CD4-positive, alpha-beta memory T cell (primary cell): ENCODE measurements at regions of chr1 and their contacts with region 1.

Region 1: GRCh38 chr1:93078986-93079654 is at the start of gene MTF2:
- DNase-seq: peak; percentile 89 to 91 (median 90)
- H3K4me3 ChIP-seq: peak within 1 kb of the TSS; percentile 97
- H3K4me3 Mint-ChIP-seq: peak within 1 kb of the TSS; percentile 92 to 99 (median 98)
- H3K27ac ChIP-seq: peak within 1 kb of the TSS; percentile 96
- H3K27ac Mint-ChIP-seq: peak within 1 kb of the TSS; percentile 94 to 100 (median 95)
- H3K4me1 ChIP-seq: peaks cover 46% of the 10 kb centered on the region
- H3K4me1 Mint-ChIP-seq: peaks cover 21 to 58% (median 37%) of the 10 kb centered on the region in 4 donors
- H3K27me3 ChIP-seq: no peaks in the 10 kb centered on the region
- H3K27me3 Mint-ChIP-seq: no peaks in the 10 kb centered on the region
- total RNA-seq, gene MTF2: 46.5 to 47.4 TPM

Region 2: DNA sequence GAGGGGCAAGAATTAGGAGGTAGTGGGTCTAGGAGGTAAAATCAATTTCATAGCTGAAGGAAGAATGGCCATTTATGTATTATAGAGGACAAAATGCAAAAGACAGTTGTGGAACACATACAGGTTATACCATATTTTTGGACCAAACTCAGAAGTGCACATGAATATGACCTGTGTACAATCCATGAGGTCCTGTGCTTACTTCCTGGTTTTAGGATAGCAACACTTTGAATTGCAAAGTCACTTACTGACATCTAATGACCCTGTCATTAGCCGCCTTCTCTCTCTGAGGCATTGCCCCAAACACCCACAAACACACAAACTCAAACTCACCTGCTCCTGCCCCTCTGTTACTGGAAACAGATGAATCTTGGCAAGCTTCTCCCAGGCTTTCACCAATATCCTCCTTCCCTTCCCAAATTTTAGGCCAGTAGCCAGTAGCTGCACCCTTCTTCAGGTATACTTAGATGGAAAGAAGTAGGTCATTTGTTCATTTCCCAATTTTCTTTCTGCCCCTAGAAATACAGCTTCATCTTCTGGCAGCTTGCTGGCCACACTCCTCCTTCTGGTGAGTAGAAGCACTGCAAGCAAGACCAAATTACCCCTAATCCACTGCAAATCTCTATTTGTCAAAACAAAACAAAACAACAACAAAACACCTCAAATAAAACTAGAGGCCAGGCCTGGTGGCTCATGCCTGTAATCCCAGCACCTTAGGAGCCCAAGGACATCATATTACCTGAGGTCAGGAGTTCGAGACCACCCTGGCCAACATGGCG is 260.9 kb before region 1 on chr1:
- CTCF ChIA-PET with region 1: no interaction called
- POLR2A ChIA-PET with region 1: no interaction called
- intact Hi-C with region 1: no loop called
- DNase-seq: peak in 4 of 5 donors; percentile 16 to 43 (median 26)
- H3K4me3 ChIP-seq: no peak overlapping the region
- H3K4me3 Mint-ChIP-seq: no peak overlapping the region
- H3K27ac ChIP-seq: no peak overlapping the region
- H3K27ac Mint-ChIP-seq: peak overlapping the region in 1 of 7 donors; percentile 3
- H3K4me1 ChIP-seq: no peaks in the 10 kb centered on the region
- H3K4me1 Mint-ChIP-seq: peaks cover 0 to 3% (median 0%) of the 10 kb centered on the region in 4 donors
- H3K27me3 ChIP-seq: no peaks in the 10 kb centered on the region
- H3K27me3 Mint-ChIP-seq: peaks cover 4 to 10% of the 10 kb centered on the region in 2 donors

Region 3: GRCh38 chr1:92858564-92859399 is 220.3 kb before region 1 on chr1:
- CTCF ChIA-PET with region 1: interaction called, 6 read pairs
- POLR2A ChIA-PET with region 1: interaction called, 3 read pairs
- intact Hi-C with region 1: loop called (anchors 5 kb)
- DNase-seq: peak; percentile 70 to 84 (median 80)
- H3K4me3 ChIP-seq: no peak overlapping the region
- H3K4me3 Mint-ChIP-seq: peak overlapping the region; percentile 48 to 81 (median 71)
- H3K27ac ChIP-seq: peak overlapping the region; percentile 6
- H3K27ac Mint-ChIP-seq: peak overlapping the region; percentile 14 to 89 (median 68)
- H3K4me1 ChIP-seq: peaks cover 22% of the 10 kb centered on the region
- H3K4me1 Mint-ChIP-seq: peaks cover 14 to 17% (median 15%) of the 10 kb centered on the region in 4 donors
- H3K27me3 ChIP-seq: no peaks in the 10 kb centered on the region
- H3K27me3 Mint-ChIP-seq: no peaks in the 10 kb centered on the region

Region 4: GRCh38 chr1:93051961-93052360 is 27.2 kb before region 1 on chr1:
- CTCF ChIA-PET with region 1: no interaction called
- POLR2A ChIA-PET with region 1: no interaction called
- intact Hi-C with region 1: no loop called
- DNase-seq: no peak
- H3K4me3 ChIP-seq: no peak overlapping the region
- H3K4me3 Mint-ChIP-seq: no peak overlapping the region
- H3K27ac ChIP-seq: no peak overlapping the region
- H3K27ac Mint-ChIP-seq: no peak overlapping the region
- H3K4me1 ChIP-seq: no peaks in the 10 kb centered on the region
- H3K4me1 Mint-ChIP-seq: no peaks in the 10 kb centered on the region
- H3K27me3 ChIP-seq: no peaks in the 10 kb centered on the region
- H3K27me3 Mint-ChIP-seq: peaks cover 0 to 1% of the 10 kb centered on the region in 2 donors

Region 5: GRCh38 chr1:93061895-93062792 is 17.0 kb before region 1 on chr1:
- CTCF ChIA-PET with region 1: interaction called, 24 read pairs
- POLR2A ChIA-PET with region 1: interaction called, 15 read pairs
- intact Hi-C with region 1: no loop called
- DNase-seq: peak; percentile 43 to 57 (median 49)
- H3K4me3 ChIP-seq: no peak overlapping the region
- H3K4me3 Mint-ChIP-seq: no peak overlapping the region
- H3K27ac ChIP-seq: no peak overlapping the region
- H3K27ac Mint-ChIP-seq: no peak overlapping the region
- H3K4me1 ChIP-seq: no peaks in the 10 kb centered on the region
- H3K4me1 Mint-ChIP-seq: peaks cover 0 to 5% (median 4%) of the 10 kb centered on the region in 4 donors
- H3K27me3 ChIP-seq: no peaks in the 10 kb centered on the region
- H3K27me3 Mint-ChIP-seq: peaks cover 12 to 20% of the 10 kb centered on the region in 2 donors

Region 6: DNA sequence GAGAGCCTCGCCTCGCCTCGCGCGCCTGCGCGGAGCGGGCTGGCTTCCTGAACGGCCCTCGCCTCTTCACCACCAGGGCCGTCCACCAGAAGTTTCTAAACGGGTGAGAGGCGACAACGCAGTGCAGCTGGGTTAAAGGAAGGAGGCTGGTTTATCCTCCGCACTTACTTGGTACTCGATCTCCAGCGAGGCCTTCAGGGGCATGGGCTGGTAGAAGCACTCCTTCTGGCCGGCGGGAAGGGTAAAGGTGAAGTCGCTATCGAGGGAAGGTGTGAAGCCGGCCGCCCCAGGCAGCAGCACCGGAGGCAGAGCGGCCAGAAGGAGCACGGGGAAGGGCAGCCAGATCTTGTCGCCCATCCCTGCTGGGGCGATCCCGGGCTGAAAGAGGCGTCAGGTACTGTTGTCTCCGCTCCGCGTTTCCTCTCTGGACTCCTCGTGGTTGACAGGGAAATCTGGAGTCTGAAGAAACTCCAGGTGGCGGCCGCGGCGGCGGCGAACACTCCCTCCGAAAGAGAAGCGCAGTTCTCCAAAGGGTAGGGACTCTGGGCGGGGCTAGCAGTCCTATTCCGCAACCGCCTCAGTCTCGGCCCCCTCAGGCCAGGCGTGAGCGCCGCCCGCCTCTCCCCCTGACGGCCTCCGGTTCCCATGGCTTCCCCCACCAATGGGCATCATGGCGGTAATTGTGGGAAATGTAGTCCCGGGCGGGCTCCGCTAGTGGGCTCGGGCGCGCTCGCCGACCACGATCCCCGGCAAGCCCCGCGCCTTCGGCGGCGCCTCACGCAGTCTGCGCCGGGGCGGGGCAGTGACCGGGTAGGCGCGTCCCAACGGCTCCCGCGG is 101.0 kb after region 1 on chr1 and contains the start of gene TMED5:
- CTCF ChIA-PET with region 1: interaction called, 7 read pairs
- POLR2A ChIA-PET with region 1: interaction called, 10 read pairs
- intact Hi-C with region 1: loop called (anchors 1 kb)
- DNase-seq: peak; percentile 97 to 98 (median 97)
- H3K4me3 ChIP-seq: peak within 1 kb of the TSS; percentile 84 to 99
- H3K4me3 Mint-ChIP-seq: peak within 1 kb of the TSS; percentile 89 to 99 (median 93)
- H3K27ac ChIP-seq: peak within 1 kb of the TSS; percentile 98
- H3K27ac Mint-ChIP-seq: peak within 1 kb of the TSS; percentile 90 to 99 (median 96)
- H3K4me1 ChIP-seq: peaks cover 59% of the 10 kb centered on the region
- H3K4me1 Mint-ChIP-seq: peaks cover 26 to 70% (median 41%) of the 10 kb centered on the region in 4 donors
- H3K27me3 ChIP-seq: no peaks in the 10 kb centered on the region
- H3K27me3 Mint-ChIP-seq: no peaks in the 10 kb centered on the region
- total RNA-seq, gene TMED5: 60.1 to 60.8 TPM

Region 7: DNA sequence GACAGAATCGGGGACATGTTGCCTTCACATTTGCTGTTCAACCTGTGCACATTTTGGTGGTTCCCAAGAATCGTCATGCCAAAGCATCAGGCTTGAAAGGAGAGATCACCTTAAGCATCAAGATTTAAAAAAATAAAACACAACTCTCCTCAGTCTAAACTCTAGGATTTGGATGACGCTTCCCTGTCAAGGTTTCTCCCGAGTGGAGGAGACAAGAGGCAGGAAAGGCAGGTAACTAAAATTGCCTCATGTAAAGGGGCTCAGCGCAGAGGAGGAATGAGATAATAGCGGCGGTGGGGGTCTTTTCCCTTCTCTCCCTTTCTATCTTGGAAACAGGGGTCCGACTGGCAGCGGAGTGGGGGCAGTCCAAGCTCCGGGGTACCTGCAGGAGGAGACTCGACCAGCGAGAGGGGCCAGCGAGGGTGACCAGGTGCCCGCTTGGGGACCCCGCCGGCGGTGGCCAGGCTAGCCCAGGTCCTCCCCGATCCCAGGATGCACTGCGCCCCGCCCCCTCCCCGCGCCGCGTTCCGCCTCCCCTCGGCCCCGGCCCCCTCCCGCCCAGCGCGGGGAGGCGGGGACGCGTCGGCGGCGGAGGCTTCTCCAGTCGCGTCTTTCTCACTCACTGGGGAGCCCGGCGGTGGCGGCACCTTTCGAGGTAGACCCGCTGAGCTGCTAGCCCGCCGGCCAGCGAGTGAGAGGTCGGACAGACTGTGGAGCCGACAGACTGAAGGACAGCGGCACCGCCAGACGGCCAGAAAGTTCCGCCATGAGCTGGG is 368.6 kb after region 1 on chr1 and contains the start of gene FNBP1L:
- CTCF ChIA-PET with region 1: no interaction called
- POLR2A ChIA-PET with region 1: interaction called, 11 read pairs
- intact Hi-C with region 1: loop called (anchors 10 kb)
- DNase-seq: peak; percentile 46 to 59 (median 54)
- H3K4me3 ChIP-seq: peak within 1 kb of the TSS; percentile 30 to 57
- H3K4me3 Mint-ChIP-seq: peak within 1 kb of the TSS; percentile 93 to 99 (median 96)
- H3K27ac ChIP-seq: no peak within 1 kb of the TSS
- H3K27ac Mint-ChIP-seq: peak within 1 kb of the TSS; percentile 59 to 90 (median 83)
- H3K4me1 ChIP-seq: peaks cover 13% of the 10 kb centered on the region
- H3K4me1 Mint-ChIP-seq: peaks cover 16 to 22% (median 19%) of the 10 kb centered on the region in 4 donors
- H3K27me3 ChIP-seq: peaks cover 23% of the 10 kb centered on the region
- H3K27me3 Mint-ChIP-seq: peaks cover 21 to 32% of the 10 kb centered on the region in 2 donors
- total RNA-seq, gene FNBP1L: 1.8 to 2.2 TPM